Right cardiac atrium (tissue), 5 donors: ENCODE measurements at regions of chr20 and their contacts with region 1.

Region 1: GRCh38 chr20:40741507-40742106 is 52.6 kb upstream of the MAFB start:
- DNase-seq: peak in 2 of 3 donors; percentile 50 to 54
- ATAC-seq: peak in 1 of 2 donors; percentile 34
- H3K4me3 ChIP-seq: no peak overlapping the region
- H3K27ac ChIP-seq: no peak overlapping the region
- H3K4me1 ChIP-seq: no peaks in the 10 kb centered on the region
- H3K27me3 ChIP-seq: peaks cover 1% of the 10 kb centered on the region

Region 2: DNA sequence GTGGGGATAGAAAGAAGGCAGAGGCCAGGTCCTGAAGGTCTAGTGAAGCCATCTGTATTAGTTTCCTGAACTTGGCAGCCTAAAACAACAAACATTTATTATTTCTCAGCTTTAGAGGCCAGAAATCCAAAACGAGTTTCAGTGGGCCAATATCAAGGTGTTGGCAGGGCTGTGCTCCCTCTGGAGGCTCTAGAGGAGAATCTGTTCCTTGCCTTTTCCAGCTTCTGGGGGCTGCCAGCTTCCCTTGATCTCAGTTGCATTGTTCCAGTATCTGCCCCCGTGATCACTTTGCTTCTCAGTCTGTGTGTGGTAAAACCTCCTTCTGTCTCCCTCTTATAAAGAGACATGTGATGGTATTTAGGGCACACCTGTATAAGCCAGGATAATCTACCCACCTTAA is 134.9 kb before region 1 on chr20:
- intact Hi-C with region 1: no loop called
- DNase-seq: no peak
- ATAC-seq: no peak
- H3K4me3 ChIP-seq: no peak overlapping the region
- H3K27ac ChIP-seq: no peak overlapping the region
- H3K4me1 ChIP-seq: no peaks in the 10 kb centered on the region
- H3K27me3 ChIP-seq: no peaks in the 10 kb centered on the region

Region 3: GRCh38 chr20:40956542-40957264 is 215.1 kb after region 1 on chr20:
- intact Hi-C with region 1: loop called in 1 of 4 experiments (anchors 10 kb)
- DNase-seq: no peak
- ATAC-seq: no peak
- H3K4me3 ChIP-seq: no peak overlapping the region
- H3K27ac ChIP-seq: no peak overlapping the region
- H3K4me1 ChIP-seq: no peaks in the 10 kb centered on the region
- H3K27me3 ChIP-seq: no peaks in the 10 kb centered on the region

Region 4: DNA sequence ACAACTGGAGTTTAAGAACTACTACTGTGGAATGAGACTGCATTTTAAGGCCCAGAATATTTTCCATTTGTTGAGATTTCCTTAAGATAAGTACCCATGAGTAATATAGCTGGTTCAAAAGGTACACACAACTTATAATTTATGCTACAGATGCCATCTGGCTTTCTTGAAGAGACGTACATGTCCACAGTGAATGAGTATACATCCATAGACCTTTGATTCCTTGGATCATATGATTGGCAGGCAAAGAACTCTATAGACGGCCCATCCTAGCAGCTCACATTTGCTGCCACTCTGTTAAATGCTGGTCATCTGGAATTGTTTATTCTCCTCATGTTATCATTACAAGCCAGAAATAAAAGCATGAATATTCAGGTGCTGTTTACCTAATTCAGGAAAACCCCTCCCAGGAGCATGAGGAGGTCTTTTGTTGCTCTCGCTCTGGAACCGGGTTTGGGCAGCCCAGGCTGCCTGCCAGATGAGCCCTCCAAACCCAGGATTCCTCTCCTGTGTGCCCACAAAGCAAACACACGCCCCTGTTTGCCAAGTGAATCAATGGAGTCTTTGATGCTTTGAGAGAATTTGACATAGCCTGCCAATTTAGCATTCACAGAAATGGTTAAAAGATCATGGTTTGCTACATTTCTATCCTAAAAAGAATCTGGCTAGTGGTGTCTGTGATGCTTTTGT is 378.1 kb after region 1 on chr20:
- intact Hi-C with region 1: no loop called
- DNase-seq: no peak
- ATAC-seq: no peak
- H3K4me3 ChIP-seq: no peak overlapping the region
- H3K27ac ChIP-seq: no peak overlapping the region
- H3K4me1 ChIP-seq: no peaks in the 10 kb centered on the region
- H3K27me3 ChIP-seq: no peaks in the 10 kb centered on the region